ENCODE measurements at regions of chr15 and their contacts with region 1.

Region 1: GRCh38 chr15:68154923-68155559 is 50.1 kb downstream of the CALML4 start:
- DNase-seq: no peak
- ATAC-seq: peak; percentile 36; the same call in 1 of the 3 replicates
- H3K4me3 ChIP-seq: no peak overlapping the region
- H3K27ac ChIP-seq: no peak overlapping the region
- H3K4me1 ChIP-seq: no peaks in the 10 kb centered on the region
- H3K27me3 ChIP-seq: no peaks in the 10 kb centered on the region
- CTCF ChIP-seq: peak; percentile 54 to 66 (median 62)
- EP300 ChIP-seq: no peak
- POLR2A ChIP-seq: no peak
- RAD21 ChIP-seq: peak; percentile 91

Region 2: GRCh38 chr15:67358812-67359211 is 796.2 kb before region 1 on chr15:
- CTCF ChIA-PET with region 1: no interaction called
- POLR2A ChIA-PET with region 1: no interaction called
- RAD21 ChIA-PET with region 1: no interaction called
- SMC1A ChIA-PET with region 1: no interaction called
- in situ Hi-C with region 1: no loop called
- intact Hi-C with region 1: no loop called
- DNase-seq: no peak
- ATAC-seq: no peak
- H3K4me3 ChIP-seq: no peak overlapping the region
- H3K27ac ChIP-seq: no peak overlapping the region
- H3K4me1 ChIP-seq: no peaks in the 10 kb centered on the region
- H3K27me3 ChIP-seq: no peaks in the 10 kb centered on the region
- CTCF ChIP-seq: no peak
- EP300 ChIP-seq: no peak
- POLR2A ChIP-seq: no peak
- RAD21 ChIP-seq: no peak

Region 3: DNA sequence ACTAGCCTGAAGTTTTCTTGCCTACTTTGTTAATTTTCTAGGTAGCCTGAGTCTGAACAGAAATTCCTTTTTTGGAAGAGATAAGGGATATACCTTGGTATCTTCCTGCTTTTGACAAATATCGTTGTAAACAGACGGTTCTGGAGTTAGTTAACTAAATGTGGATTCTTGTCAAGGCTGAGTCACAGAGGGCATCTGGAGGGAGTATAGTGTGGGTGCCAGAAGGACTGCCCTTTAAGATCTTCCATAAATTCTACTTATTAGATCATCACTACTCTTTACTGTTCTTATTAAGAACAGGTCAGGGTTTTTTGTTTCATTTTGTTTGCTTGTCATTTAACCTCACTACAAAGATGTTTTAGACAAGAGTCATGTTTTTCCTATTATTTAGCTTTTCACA is 455.0 kb before region 1 on chr15:
- CTCF ChIA-PET with region 1: no interaction called
- POLR2A ChIA-PET with region 1: no interaction called
- RAD21 ChIA-PET with region 1: no interaction called
- SMC1A ChIA-PET with region 1: no interaction called
- in situ Hi-C with region 1: no loop called
- intact Hi-C with region 1: no loop called
- DNase-seq: no peak
- ATAC-seq: no peak
- H3K4me3 ChIP-seq: no peak overlapping the region
- H3K27ac ChIP-seq: no peak overlapping the region
- H3K4me1 ChIP-seq: no peaks in the 10 kb centered on the region
- H3K27me3 ChIP-seq: no peaks in the 10 kb centered on the region
- CTCF ChIP-seq: no peak
- EP300 ChIP-seq: no peak
- POLR2A ChIP-seq: no peak
- RAD21 ChIP-seq: no peak

Region 4: GRCh38 chr15:67906382-67906781 is 248.7 kb before region 1 on chr15:
- CTCF ChIA-PET with region 1: interaction called, 3 read pairs
- POLR2A ChIA-PET with region 1: no interaction called
- RAD21 ChIA-PET with region 1: interaction called, 3 read pairs
- SMC1A ChIA-PET with region 1: interaction called, 13 read pairs
- in situ Hi-C with region 1: no loop called
- intact Hi-C with region 1: no loop called
- DNase-seq: no peak
- ATAC-seq: no peak
- H3K4me3 ChIP-seq: no peak overlapping the region
- H3K27ac ChIP-seq: no peak overlapping the region
- H3K4me1 ChIP-seq: peaks cover 25% of the 10 kb centered on the region
- H3K27me3 ChIP-seq: no peaks in the 10 kb centered on the region
- CTCF ChIP-seq: peak; percentile 6 to 32 (median 10); a peak in 1 of 6 replicates
- EP300 ChIP-seq: no peak
- POLR2A ChIP-seq: no peak
- RAD21 ChIP-seq: peak; percentile 22; the same call in 1 of the 2 replicates

Region 5: GRCh38 chr15:68053701-68054627 is 101.1 kb before region 1 on chr15 and contains the start of gene PIAS1:
- CTCF ChIA-PET with region 1: interaction called, 5 read pairs
- POLR2A ChIA-PET with region 1: interaction called, 3 read pairs
- RAD21 ChIA-PET with region 1: interaction called, 23 read pairs
- SMC1A ChIA-PET with region 1: interaction called, 22 read pairs
- in situ Hi-C with region 1: no loop called
- intact Hi-C with region 1: loop called (anchors 5 kb)
- DNase-seq: peak; percentile 73
- ATAC-seq: peak; percentile 87
- H3K4me3 ChIP-seq: peak within 1 kb of the TSS; percentile 79
- H3K27ac ChIP-seq: peak within 1 kb of the TSS; percentile 88
- H3K4me1 ChIP-seq: peaks cover 6% of the 10 kb centered on the region
- H3K27me3 ChIP-seq: no peaks in the 10 kb centered on the region
- CTCF ChIP-seq: no peak
- EP300 ChIP-seq: no peak
- POLR2A ChIP-seq: peak; percentile 93
- RAD21 ChIP-seq: no peak
- polyA plus RNA-seq, gene PIAS1: 20.2 to 22.2 TPM

Region 6: GRCh38 chr15:68073576-68074288 is 81.3 kb before region 1 on chr15:
- CTCF ChIA-PET with region 1: no interaction called
- POLR2A ChIA-PET with region 1: interaction called, 10 read pairs
- RAD21 ChIA-PET with region 1: no interaction called
- SMC1A ChIA-PET with region 1: interaction called, 4 read pairs
- in situ Hi-C with region 1: no loop called
- intact Hi-C with region 1: no loop called
- DNase-seq: no peak
- ATAC-seq: no peak
- H3K4me3 ChIP-seq: no peak overlapping the region
- H3K27ac ChIP-seq: no peak overlapping the region
- H3K4me1 ChIP-seq: no peaks in the 10 kb centered on the region
- H3K27me3 ChIP-seq: no peaks in the 10 kb centered on the region
- CTCF ChIP-seq: no peak
- EP300 ChIP-seq: no peak
- POLR2A ChIP-seq: no peak
- RAD21 ChIP-seq: no peak

Region 7: DNA sequence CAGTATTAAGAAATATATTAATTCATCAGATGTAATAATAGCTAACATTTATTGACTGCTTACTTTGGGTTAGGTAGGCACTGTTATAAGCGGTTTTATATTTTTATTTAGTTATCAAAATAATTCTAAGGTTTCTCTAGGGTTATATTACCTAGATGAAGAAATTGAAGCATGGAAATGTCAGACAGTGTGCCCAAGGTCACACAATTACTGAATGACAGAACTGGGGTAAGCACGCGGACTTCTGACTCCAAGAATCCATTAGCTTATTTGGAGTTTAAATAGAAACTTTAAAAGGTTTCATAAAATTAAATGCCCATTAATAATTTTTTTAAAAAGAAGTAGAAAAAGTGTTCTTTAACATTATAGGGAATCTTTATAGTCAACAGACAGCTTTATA is 24.2 kb before region 1 on chr15:
- CTCF ChIA-PET with region 1: interaction called, 10 read pairs
- POLR2A ChIA-PET with region 1: no interaction called
- RAD21 ChIA-PET with region 1: interaction called, 3 read pairs
- SMC1A ChIA-PET with region 1: interaction called, 4 read pairs
- in situ Hi-C with region 1: no loop called
- intact Hi-C with region 1: no loop called
- DNase-seq: no peak
- ATAC-seq: no peak
- H3K4me3 ChIP-seq: no peak overlapping the region
- H3K27ac ChIP-seq: no peak overlapping the region
- H3K4me1 ChIP-seq: no peaks in the 10 kb centered on the region
- H3K27me3 ChIP-seq: no peaks in the 10 kb centered on the region
- CTCF ChIP-seq: no peak
- EP300 ChIP-seq: no peak
- POLR2A ChIP-seq: no peak
- RAD21 ChIP-seq: no peak

Region 8: GRCh38 chr15:68143129-68143528 is 11.9 kb before region 1 on chr15:
- CTCF ChIA-PET with region 1: interaction called, 10 read pairs
- POLR2A ChIA-PET with region 1: interaction called, 11 read pairs
- RAD21 ChIA-PET with region 1: interaction called, 5 read pairs
- SMC1A ChIA-PET with region 1: interaction called, 5 read pairs
- in situ Hi-C with region 1: no loop called
- intact Hi-C with region 1: no loop called
- DNase-seq: no peak
- ATAC-seq: no peak
- H3K4me3 ChIP-seq: no peak overlapping the region
- H3K27ac ChIP-seq: no peak overlapping the region
- H3K4me1 ChIP-seq: no peaks in the 10 kb centered on the region
- H3K27me3 ChIP-seq: no peaks in the 10 kb centered on the region
- CTCF ChIP-seq: no peak
- EP300 ChIP-seq: no peak
- POLR2A ChIP-seq: no peak
- RAD21 ChIP-seq: no peak

Region 9: GRCh38 chr15:68360721-68361120 is 205.7 kb after region 1 on chr15:
- CTCF ChIA-PET with region 1: no interaction called
- POLR2A ChIA-PET with region 1: no interaction called
- RAD21 ChIA-PET with region 1: no interaction called
- SMC1A ChIA-PET with region 1: no interaction called
- in situ Hi-C with region 1: no loop called
- intact Hi-C with region 1: no loop called
- DNase-seq: no peak
- ATAC-seq: no peak
- H3K4me3 ChIP-seq: no peak overlapping the region
- H3K27ac ChIP-seq: no peak overlapping the region
- H3K4me1 ChIP-seq: no peaks in the 10 kb centered on the region
- H3K27me3 ChIP-seq: peaks cover 0 to 2% of the 10 kb centered on the region in 2 experiments; a peak in 2 of 4 replicates
- CTCF ChIP-seq: no peak
- EP300 ChIP-seq: no peak
- POLR2A ChIP-seq: no peak
- RAD21 ChIP-seq: no peak

Measured in GM12878 (cell line).